Aorta (tissue), 5 donors: ENCODE measurements at regions of chr16 and their contacts with region 1.

Region 1: DNA sequence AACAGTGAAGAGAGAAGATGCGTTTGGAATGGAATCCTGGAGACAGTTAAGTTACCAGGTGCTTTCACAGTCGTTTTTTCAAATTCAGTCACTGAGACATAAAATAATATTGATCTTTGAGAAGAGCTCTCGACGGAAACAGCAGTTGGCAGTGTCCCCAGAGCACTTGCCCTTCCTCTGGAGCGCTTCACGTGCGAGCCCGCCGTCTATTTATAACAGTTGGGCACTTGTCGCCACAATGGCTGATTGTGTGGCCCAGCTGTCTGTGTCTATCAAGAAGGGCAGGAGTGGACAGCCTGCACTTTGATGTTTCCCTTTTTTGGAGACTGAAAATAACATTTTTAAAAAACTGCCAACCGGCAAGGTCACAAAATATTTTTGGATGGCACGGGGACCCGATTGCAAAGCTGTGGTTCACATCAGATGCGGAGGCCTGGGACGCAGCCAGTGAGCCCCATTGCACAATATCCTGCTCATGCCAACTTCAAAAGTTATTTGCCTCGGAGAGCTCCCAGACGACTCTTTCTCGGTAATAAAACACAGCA is 62.9 kb downstream of the ADCY9 start:
- DNase-seq: peak; percentile 84 to 91
- ATAC-seq: peak; percentile 87
- H3K4me3 ChIP-seq: peak overlapping the region; percentile 1 to 4
- H3K27ac ChIP-seq: peak overlapping the region; percentile 1 to 72
- H3K4me1 ChIP-seq: peaks cover 0 to 5% of the 10 kb centered on the region in 2 donors
- H3K27me3 ChIP-seq: no peaks in the 10 kb centered on the region

Region 2: GRCh38 chr16:4090351-4090851 is 37.0 kb after region 1 on chr16:
- intact Hi-C with region 1: loop called in 1 of 2 experiments (anchors 5 kb)
- DNase-seq: peak in 1 of 2 donors; percentile 76
- ATAC-seq: peak; percentile 80
- H3K4me3 ChIP-seq: no peak overlapping the region
- H3K27ac ChIP-seq: peak overlapping the region in 1 of 2 donors; percentile 45
- H3K4me1 ChIP-seq: peaks cover 3 to 8% of the 10 kb centered on the region in 2 donors
- H3K27me3 ChIP-seq: no peaks in the 10 kb centered on the region

Region 3: GRCh38 chr16:4101421-4102219 is 48.2 kb after region 1 on chr16:
- intact Hi-C with region 1: loop called in 1 of 2 experiments (anchors 10 kb)
- DNase-seq: peak in 1 of 2 donors; percentile 76
- ATAC-seq: peak; percentile 22
- H3K4me3 ChIP-seq: no peak overlapping the region
- H3K27ac ChIP-seq: no peak overlapping the region
- H3K4me1 ChIP-seq: peaks cover under 1 to 1% of the 10 kb centered on the region in 2 donors
- H3K27me3 ChIP-seq: no peaks in the 10 kb centered on the region

Region 4: GRCh38 chr16:4194661-4195060 is 141.3 kb after region 1 on chr16:
- intact Hi-C with region 1: no loop called
- DNase-seq: no peak
- ATAC-seq: no peak
- H3K4me3 ChIP-seq: no peak overlapping the region
- H3K27ac ChIP-seq: no peak overlapping the region
- H3K4me1 ChIP-seq: no peaks in the 10 kb centered on the region
- H3K27me3 ChIP-seq: no peaks in the 10 kb centered on the region

Region 5: DNA sequence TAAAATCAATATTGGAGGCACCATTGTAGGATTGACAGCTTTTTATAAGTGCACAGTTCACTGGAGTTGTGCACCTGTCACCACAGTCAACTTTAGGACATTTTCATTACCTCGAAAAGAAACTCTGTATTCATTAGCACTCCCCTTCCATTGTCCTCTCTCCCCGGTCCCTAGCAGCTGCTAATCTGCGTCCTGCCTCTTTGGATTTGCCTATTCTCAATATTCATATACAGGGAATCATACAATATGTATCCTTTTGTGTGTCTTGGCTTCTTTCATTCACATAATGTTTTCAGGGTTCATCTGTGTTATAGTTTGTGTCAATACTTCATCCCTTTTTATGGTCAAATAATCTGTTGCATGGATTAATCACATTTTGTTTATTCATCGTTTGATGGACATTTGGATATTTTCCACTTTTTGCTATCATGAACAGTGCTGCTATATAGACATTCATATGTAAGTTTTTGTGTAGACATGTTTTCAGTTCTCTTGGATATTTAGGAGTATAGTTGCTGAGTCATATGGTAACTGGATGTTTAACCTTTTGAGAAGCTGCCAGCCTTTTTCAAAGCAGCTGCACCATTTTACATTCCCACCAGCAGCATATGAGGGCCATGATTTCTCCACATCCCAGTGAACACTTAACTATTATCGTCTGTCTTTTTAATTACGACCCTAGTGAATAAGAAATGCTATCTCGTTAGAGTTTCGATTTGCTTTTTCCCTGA is 382.1 kb after region 1 on chr16:
- intact Hi-C with region 1: no loop called
- DNase-seq: no peak
- ATAC-seq: no peak
- H3K4me3 ChIP-seq: no peak overlapping the region
- H3K27ac ChIP-seq: no peak overlapping the region
- H3K4me1 ChIP-seq: no peaks in the 10 kb centered on the region
- H3K27me3 ChIP-seq: no peaks in the 10 kb centered on the region